ENCODE measurements at regions of chr14 and their contacts with region 1.

Region 1: DNA sequence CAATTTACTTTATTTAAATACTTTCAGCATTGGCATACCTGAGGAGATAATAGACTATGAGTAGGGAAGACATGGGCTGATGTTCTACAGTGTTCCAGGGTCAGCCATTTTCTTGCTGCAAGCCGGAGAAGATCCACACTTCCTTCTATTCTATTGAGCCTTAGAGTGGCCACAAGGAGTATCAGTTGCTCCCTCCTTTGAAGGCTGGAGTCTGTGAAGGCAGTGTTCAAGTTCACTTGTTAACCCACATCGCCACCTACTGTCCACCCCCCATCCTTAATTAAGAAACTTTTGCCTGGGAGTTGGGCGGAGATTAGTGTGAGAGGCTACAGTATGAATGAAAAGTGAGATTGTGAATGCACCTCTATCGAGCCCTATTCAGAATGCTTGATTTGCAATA is 666.6 kb downstream of the NRXN3 start:
- DNase-seq: peak in 2 of 5 donors; percentile 11 to 20
- ATAC-seq: peak in 3 of 4 donors; percentile 37 to 49 (median 38)
- H3K4me3 ChIP-seq: no peak overlapping the region
- H3K27ac ChIP-seq: no peak overlapping the region
- H3K4me1 ChIP-seq: peaks cover 0 to 5% (median 0%) of the 10 kb centered on the region in 12 donors
- H3K27me3 ChIP-seq: peaks cover 0 to 15% (median 0%) of the 10 kb centered on the region in 9 donors
- CTCF ChIP-seq: peak in 11 of 12 donors; percentile 9 to 53 (median 32)
- POLR2A ChIP-seq: no peak

Region 2: GRCh38 chr14:78254911-78255461 is 581.8 kb before region 1 on chr14:
- intact Hi-C with region 1: no loop called
- DNase-seq: no peak
- ATAC-seq: no peak
- H3K4me3 ChIP-seq: no peak overlapping the region
- H3K27ac ChIP-seq: no peak overlapping the region
- H3K4me1 ChIP-seq: no peaks in the 10 kb centered on the region
- H3K27me3 ChIP-seq: peaks cover 0 to 10% (median 0%) of the 10 kb centered on the region in 9 donors
- CTCF ChIP-seq: no peak
- POLR2A ChIP-seq: no peak

Region 3: DNA sequence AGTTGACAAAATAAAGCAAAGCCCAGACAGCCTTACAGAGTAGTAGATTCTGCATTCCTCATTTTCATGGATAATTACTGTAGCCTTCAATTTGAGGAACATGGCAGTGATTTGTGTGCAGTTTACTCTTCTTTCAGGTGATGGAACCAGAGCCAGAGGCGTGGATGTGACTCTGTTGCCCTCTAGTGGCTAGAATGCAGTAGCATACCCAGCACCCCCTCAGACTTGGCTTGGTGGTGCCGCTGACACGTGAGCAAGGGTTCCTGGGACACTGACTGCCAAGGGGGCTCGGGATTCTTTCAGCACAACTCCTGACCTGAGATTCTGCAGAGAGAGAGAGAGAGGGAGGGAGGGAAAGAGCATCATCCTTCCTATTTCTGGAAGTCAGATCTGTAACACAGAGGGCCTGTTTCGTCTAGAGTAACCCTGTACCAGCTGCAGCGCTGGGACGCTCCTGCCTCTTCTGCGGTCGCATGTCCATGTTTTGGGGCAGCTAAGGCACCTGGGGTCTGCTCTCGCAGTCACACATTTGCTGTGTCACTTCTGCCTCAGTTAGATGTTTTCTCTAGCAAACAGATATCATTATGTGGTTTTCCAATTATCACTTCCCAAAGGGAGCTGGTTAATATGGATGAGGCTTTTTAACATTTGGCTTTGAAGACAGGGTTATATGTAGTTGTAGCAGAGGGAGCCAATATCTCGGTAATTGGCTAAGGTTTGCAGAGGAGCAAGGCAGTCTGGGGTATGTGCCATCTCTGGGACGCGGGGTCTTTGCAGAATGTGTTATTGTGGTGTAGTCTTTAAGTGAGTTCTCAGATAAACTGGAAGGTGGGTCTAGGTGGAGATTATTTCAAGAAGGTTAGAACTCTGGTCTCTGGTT is 238.5 kb before region 1 on chr14:
- intact Hi-C with region 1: loop called in 1 of 10 experiments (anchors 10 kb)
- DNase-seq: peak in 4 of 5 donors; percentile 24 to 42 (median 34)
- ATAC-seq: peak; percentile 51 to 89 (median 87)
- H3K4me3 ChIP-seq: no peak overlapping the region
- H3K27ac ChIP-seq: no peak overlapping the region
- H3K4me1 ChIP-seq: peaks cover 0 to 4% (median 0%) of the 10 kb centered on the region in 12 donors
- H3K27me3 ChIP-seq: no peaks in the 10 kb centered on the region
- CTCF ChIP-seq: peak; percentile 73 to 92 (median 84)
- POLR2A ChIP-seq: no peak

Measured in heart left ventricle (tissue), 16 donors.